GM10248 (cell line): ENCODE measurements at regions of chr6 and their contacts with region 1.

Region 1: GRCh38 chr6:82006027-82006738 is 241.4 kb downstream of the IBTK start:
- DNase-seq: no peak
- CTCF ChIP-seq: peak; percentile 69

Region 2: DNA sequence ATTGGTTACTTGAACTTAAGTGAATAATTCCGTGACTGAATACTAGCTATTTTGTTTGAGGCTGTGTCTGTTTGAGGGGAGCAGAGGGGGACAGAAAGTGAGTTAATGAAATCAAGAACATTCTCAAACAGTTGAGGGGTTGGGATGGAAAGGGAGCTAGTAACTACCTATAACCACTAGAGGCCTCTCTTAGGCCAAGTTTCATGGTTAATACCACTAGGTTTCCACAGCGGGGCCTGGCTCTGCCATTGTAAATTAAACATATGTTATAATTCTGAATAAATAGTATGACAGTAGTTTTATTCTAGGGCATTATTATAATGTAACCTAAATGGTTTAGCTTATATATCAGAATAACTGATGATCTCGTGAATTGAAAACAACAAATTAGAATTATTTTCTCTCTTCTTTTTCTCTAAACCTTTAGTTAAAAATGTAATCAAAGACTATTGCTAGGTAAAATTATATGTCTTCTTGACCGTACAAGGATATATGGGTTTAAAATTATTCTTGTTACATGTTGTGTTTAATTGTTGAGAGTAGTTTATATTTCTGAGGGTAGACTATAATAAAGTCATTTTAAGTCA is 1791.7 kb before region 1 on chr6:
- CTCF ChIA-PET with region 1: interaction called, 13 read pairs
- POLR2A ChIA-PET with region 1: no interaction called
- DNase-seq: peak; percentile 24
- CTCF ChIP-seq: peak; percentile 62

Region 3: GRCh38 chr6:81734085-81734484 is 272.1 kb before region 1 on chr6:
- CTCF ChIA-PET with region 1: interaction called, 28 read pairs
- POLR2A ChIA-PET with region 1: no interaction called
- DNase-seq: no peak
- CTCF ChIP-seq: no peak

Region 4: DNA sequence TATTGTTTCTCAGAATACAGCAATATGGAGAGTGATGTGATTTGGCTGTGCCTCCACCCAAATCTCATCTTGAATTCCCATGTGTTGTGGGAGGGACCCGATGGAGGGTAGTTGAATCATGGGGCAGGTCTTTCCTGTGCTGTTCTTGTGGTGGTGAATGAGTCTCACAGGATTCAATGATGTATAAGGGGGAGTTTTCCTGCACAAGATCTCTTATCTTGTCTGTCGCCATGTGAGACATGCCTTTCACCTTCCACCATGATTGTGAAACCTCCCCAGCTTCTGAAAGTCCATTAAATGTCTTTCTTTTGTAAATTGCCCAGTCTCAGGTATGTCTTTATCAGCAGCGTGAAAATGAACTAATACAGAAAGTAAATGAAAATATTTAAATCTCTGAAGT is 18.9 kb before region 1 on chr6:
- CTCF ChIA-PET with region 1: no interaction called
- POLR2A ChIA-PET with region 1: no interaction called
- DNase-seq: no peak
- CTCF ChIP-seq: no peak

Region 5: DNA sequence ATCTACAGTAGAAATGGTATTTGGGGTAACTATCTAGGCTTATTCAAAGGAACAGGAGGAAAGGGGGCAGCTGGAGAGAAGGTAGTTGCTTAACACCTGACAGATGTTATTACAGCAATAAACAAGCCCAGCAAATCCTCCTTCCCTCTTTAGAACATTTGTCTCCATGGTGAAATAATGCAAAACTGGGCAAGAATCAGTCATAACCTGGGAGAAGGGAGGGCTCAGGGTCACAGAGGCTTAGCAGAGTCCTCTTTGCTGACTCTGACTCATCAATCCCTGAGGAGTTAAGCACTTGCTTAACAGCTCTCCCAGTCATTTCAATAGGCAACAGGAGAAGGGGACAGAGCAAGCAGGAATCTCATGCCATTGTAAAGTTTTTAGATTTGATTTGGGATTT is 11.1 kb after region 1 on chr6:
- CTCF ChIA-PET with region 1: interaction called, 18 read pairs
- POLR2A ChIA-PET with region 1: no interaction called
- DNase-seq: no peak
- CTCF ChIP-seq: no peak

Region 6: GRCh38 chr6:82022601-82023102 is 16.5 kb after region 1 on chr6:
- CTCF ChIA-PET with region 1: interaction called, 18 read pairs
- POLR2A ChIA-PET with region 1: no interaction called
- DNase-seq: no peak
- CTCF ChIP-seq: no peak